Right ventricle myocardium superior (tissue), 1 donor: ENCODE measurements at regions of chr6 and their contacts with region 1.

Region 1: DNA sequence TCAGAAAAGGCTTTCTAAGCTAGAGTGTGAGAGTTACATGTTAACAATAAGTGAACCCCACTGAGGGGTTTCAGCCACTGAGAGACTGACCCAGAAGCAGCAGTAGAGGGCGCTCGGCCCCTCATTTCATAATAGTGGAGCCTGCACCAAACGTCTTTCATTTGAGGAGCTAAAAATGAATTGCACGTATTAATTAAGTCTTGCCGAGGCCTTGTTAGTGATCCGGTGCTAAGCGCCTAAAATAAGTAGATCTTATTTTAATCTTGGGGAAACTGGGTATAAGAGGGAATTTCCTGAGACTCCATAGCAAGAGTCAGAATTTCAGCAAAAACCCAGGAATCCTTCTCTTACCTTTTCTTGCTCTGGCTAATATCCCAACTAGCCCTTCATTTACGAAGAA is 209.7 kb downstream of the FARS2 start:
- DNase-seq: peak; percentile 75
- ATAC-seq: peak; percentile 92

Region 2: GRCh38 chr6:4973982-4974745 is 496.9 kb before region 1 on chr6:
- intact Hi-C with region 1: no loop called
- DNase-seq: peak; percentile 49
- ATAC-seq: peak; percentile 62

Region 3: GRCh38 chr6:5606546-5606945 is 135.5 kb after region 1 on chr6:
- intact Hi-C with region 1: no loop called
- DNase-seq: no peak
- ATAC-seq: no peak

Region 4: GRCh38 chr6:5764401-5764955 is 293.4 kb after region 1 on chr6:
- intact Hi-C with region 1: loop called (anchors 10 kb)
- DNase-seq: peak; percentile 50
- ATAC-seq: peak; percentile 91